ENCODE measurements at regions of chr19 and their contacts with region 1.

Region 1: DNA sequence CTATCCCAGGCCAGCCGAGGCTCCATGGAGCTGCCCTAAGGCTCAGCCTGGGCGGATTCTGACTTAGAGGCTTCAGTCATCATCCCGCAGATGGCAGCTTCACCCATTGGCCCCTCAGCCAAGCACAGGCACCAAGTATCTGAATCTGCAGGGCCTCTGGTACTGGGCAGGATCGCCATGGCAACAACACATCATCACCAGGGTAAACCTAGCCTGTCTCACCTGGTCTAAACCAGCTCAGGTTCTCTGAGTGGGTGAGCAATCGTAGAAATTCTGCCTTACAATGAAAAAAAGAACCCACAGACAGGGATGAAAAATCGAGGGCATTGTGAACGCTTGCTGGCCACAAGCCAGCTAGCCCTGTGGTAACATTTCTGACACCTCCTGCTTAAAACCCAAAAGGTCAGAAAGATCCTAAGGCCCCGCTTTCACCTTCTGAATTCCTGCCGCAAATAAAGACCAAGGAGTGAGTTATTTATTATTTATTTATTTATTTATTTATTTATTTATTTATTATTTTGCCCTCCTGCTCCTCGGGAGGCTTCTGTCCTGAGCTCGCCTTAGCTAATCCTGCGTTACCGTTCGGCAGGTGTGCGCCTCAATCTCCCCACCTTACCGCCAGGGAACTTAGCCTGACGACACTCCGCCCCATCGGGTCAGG is 12.0 kb upstream of the CEACAM21 start:
- DNase-seq: no peak
- H3K4me3 ChIP-seq: no peak overlapping the region
- H3K27ac ChIP-seq: no peak overlapping the region
- H3K4me1 ChIP-seq: peaks cover 3% of the 10 kb centered on the region
- H3K27me3 ChIP-seq: peaks cover 28 to 55% of the 10 kb centered on the region in 2 experiments
- CTCF ChIP-seq: no peak
- POLR2A ChIP-seq: no peak

Region 2: GRCh38 chr19:41449079-41449864 is 114.7 kb before region 1 on chr19:
- CTCF ChIA-PET with region 1: interaction called, 343 read pairs
- POLR2A ChIA-PET with region 1: no interaction called
- dilution Hi-C with region 1: no loop called
- intact Hi-C with region 1: loop called (anchors 1 kb)
- DNase-seq: peak; percentile 84
- H3K4me3 ChIP-seq: peak overlapping the region in 2 of 3 experiments; percentile 10 to 30
- H3K27ac ChIP-seq: no peak overlapping the region
- H3K4me1 ChIP-seq: no peaks in the 10 kb centered on the region
- H3K27me3 ChIP-seq: peaks cover 7% of the 10 kb centered on the region in 2 experiments
- CTCF ChIP-seq: peak; percentile 85 to 95
- POLR2A ChIP-seq: no peak

Region 3: DNA sequence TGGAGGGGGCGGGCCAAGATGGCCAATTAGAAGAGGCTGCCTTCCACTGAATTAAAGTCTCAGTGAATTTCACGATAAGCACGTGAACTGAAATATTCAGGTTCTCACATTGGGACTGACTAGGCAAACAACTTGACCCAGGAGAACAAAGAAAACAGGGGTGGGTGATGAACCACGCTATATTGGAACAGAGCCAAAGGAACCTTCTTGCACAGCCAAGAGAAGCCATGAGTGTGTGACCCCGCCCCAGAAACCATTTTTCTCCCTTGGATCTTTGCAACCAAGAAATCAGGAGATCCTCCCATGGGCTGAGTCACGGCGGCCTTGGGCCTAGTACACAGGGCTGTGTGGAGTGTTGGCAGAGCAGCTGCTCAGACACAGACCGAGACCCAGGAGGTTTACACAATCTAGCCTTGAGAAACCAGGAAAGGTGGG is 84.2 kb before region 1 on chr19:
- CTCF ChIA-PET with region 1: interaction called, 27 read pairs
- POLR2A ChIA-PET with region 1: no interaction called
- dilution Hi-C with region 1: no loop called
- intact Hi-C with region 1: no loop called
- DNase-seq: peak; percentile 98
- H3K4me3 ChIP-seq: peak overlapping the region in 2 of 3 experiments; percentile 56 to 98
- H3K27ac ChIP-seq: peak overlapping the region; percentile 97
- H3K4me1 ChIP-seq: peaks cover 37% of the 10 kb centered on the region
- H3K27me3 ChIP-seq: peaks cover under 1 to 3% of the 10 kb centered on the region in 2 experiments
- CTCF ChIP-seq: no peak
- POLR2A ChIP-seq: peak; percentile 96

Region 4: GRCh38 chr19:41541990-41542584 is 21.9 kb before region 1 on chr19:
- CTCF ChIA-PET with region 1: interaction called, 47 read pairs
- POLR2A ChIA-PET with region 1: no interaction called
- dilution Hi-C with region 1: no loop called
- intact Hi-C with region 1: loop called (anchors 1 kb)
- DNase-seq: peak; percentile 67
- H3K4me3 ChIP-seq: no peak overlapping the region
- H3K27ac ChIP-seq: no peak overlapping the region
- H3K4me1 ChIP-seq: peaks cover 10% of the 10 kb centered on the region
- H3K27me3 ChIP-seq: peaks cover 4 to 14% of the 10 kb centered on the region in 2 experiments
- CTCF ChIP-seq: peak; percentile 70 to 73
- POLR2A ChIP-seq: no peak

Region 5: GRCh38 chr19:41575998-41576397 is 12.0 kb after region 1 on chr19 and contains the start of gene CEACAM21:
- CTCF ChIA-PET with region 1: interaction called, 10 read pairs
- POLR2A ChIA-PET with region 1: no interaction called
- dilution Hi-C with region 1: no loop called
- intact Hi-C with region 1: loop called (anchors 2 kb)
- DNase-seq: no peak
- H3K4me3 ChIP-seq: no peak within 1 kb of the TSS
- H3K27ac ChIP-seq: no peak within 1 kb of the TSS
- H3K4me1 ChIP-seq: no peaks in the 10 kb centered on the region
- H3K27me3 ChIP-seq: peaks cover 4 to 15% of the 10 kb centered on the region in 2 experiments
- CTCF ChIP-seq: no peak
- POLR2A ChIP-seq: no peak
- total RNA-seq, gene CEACAM21: 1.7 and 2.7 TPM in 2 replicates

Region 6: DNA sequence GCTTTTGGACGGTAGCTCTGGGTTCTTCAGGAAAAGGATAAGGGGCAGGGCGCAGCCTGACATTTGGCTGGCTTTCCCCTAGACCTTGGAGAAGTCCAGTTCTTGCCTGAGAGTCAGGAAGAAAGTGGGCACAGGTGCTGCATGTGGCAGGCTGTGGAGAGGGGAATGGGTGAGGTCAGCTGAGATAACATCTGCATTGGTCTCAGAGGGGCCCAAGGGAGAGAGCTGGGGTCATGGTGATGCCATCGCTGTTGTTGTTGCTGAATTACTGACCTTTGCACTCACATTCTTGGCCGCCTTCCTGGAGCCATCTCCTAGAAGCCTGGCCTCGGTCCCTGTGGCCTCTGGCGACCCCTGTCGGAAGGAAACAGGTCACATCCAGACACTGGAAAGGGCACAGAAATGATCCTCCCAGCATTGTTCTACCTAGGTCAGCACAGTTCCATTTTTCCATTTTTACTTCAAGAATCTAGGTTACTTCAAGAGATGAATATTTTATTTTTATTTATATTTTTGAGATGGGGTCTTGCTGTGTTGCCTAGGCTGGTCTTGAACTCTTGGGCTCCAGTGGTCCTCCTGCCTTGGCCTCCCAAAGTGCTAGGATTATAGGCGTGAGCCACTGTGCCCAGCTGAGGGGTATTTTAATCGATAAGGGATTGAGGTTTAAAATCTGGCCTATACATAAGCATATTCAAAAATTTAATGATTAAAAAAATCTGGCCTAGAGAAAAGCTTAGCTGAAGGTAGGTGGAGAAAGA is 869.7 kb after region 1 on chr19:
- CTCF ChIA-PET with region 1: no interaction called
- POLR2A ChIA-PET with region 1: no interaction called
- dilution Hi-C with region 1: no loop called
- intact Hi-C with region 1: no loop called
- DNase-seq: peak; percentile 63
- H3K4me3 ChIP-seq: no peak overlapping the region
- H3K27ac ChIP-seq: no peak overlapping the region
- H3K4me1 ChIP-seq: peaks cover 10% of the 10 kb centered on the region
- H3K27me3 ChIP-seq: no peaks in the 10 kb centered on the region
- CTCF ChIP-seq: peak; percentile 62 to 69
- POLR2A ChIP-seq: no peak